ENCODE measurements at regions of chr2 and their contacts with region 1.

Region 1: GRCh38 chr2:218269899-218270720 is at the starts of genes AAMP and PNKD:
- DNase-seq: peak; percentile 100
- ATAC-seq: peak; percentile 89
- H3K4me3 ChIP-seq: peak within 1 kb of the TSS; percentile 82 to 95
- H3K4me3 Mint-ChIP-seq: peak within 1 kb of the TSS; percentile 92
- H3K27ac ChIP-seq: peak within 1 kb of the TSS; percentile 81 to 82
- H3K27ac Mint-ChIP-seq: peak within 1 kb of the TSS; percentile 92
- H3K4me1 ChIP-seq: peaks cover 31% of the 10 kb centered on the region
- H3K4me1 Mint-ChIP-seq: peaks cover 50% of the 10 kb centered on the region
- H3K27me3 ChIP-seq: no peaks in the 10 kb centered on the region
- H3K27me3 Mint-ChIP-seq: no peaks in the 10 kb centered on the region
- CTCF ChIP-seq: no peak
- total RNA-seq, gene AAMP: 44.7 to 50.4 TPM
- total RNA-seq, gene PNKD: 7.1 to 7.2 TPM

Region 2: GRCh38 chr2:218074031-218074430 is 196.1 kb before region 1 on chr2:
- CTCF ChIA-PET with region 1: no interaction called
- POLR2A ChIA-PET with region 1: no interaction called
- intact Hi-C with region 1: no loop called
- DNase-seq: peak in 2 of 9 experiments; percentile 23 to 28
- ATAC-seq: no peak
- H3K4me3 ChIP-seq: no peak overlapping the region
- H3K4me3 Mint-ChIP-seq: no peak overlapping the region
- H3K27ac ChIP-seq: no peak overlapping the region
- H3K27ac Mint-ChIP-seq: no peak overlapping the region
- H3K4me1 ChIP-seq: no peaks in the 10 kb centered on the region
- H3K4me1 Mint-ChIP-seq: peaks cover 3% of the 10 kb centered on the region
- H3K27me3 ChIP-seq: no peaks in the 10 kb centered on the region
- H3K27me3 Mint-ChIP-seq: peaks cover 5% of the 10 kb centered on the region
- CTCF ChIP-seq: no peak

Region 3: DNA sequence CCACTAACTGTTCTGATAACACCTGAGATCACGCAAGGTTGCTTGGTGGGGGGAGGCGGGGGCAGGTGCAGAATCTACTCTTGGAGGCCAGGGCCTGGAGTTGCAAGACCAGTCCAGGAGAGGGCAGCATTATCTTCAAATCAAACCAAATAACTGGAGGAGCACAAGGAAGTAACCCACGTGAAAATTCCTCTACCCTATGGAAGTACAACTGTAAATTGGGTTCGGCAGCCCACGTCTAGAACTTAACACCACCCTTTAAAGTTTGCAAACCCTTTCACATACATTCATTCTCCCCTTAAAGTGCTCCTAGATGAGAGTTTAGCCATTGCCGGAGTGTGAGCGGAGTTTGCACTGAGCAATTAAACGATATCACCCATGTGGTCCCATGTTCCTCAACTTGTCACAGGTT is 83.7 kb before region 1 on chr2:
- CTCF ChIA-PET with region 1: interaction called, 9 read pairs
- POLR2A ChIA-PET with region 1: no interaction called
- intact Hi-C with region 1: loop called in 1 of 2 experiments (anchors 1 kb)
- DNase-seq: peak; percentile 48 to 85 (median 71)
- ATAC-seq: peak; percentile 100
- H3K4me3 ChIP-seq: no peak overlapping the region
- H3K4me3 Mint-ChIP-seq: no peak overlapping the region
- H3K27ac ChIP-seq: no peak overlapping the region
- H3K27ac Mint-ChIP-seq: no peak overlapping the region
- H3K4me1 ChIP-seq: peaks cover 8% of the 10 kb centered on the region
- H3K4me1 Mint-ChIP-seq: peaks cover 8% of the 10 kb centered on the region
- H3K27me3 ChIP-seq: no peaks in the 10 kb centered on the region
- H3K27me3 Mint-ChIP-seq: no peaks in the 10 kb centered on the region
- CTCF ChIP-seq: peak; percentile 74

Region 4: GRCh38 chr2:218292048-218293014 is 22.2 kb after region 1 on chr2 and contains the start of gene TMBIM1:
- CTCF ChIA-PET with region 1: interaction called, 340 read pairs
- POLR2A ChIA-PET with region 1: interaction called, 58 read pairs
- intact Hi-C with region 1: loop called (anchors 1 kb)
- DNase-seq: peak; percentile 64 to 91 (median 79)
- ATAC-seq: peak; percentile 82
- H3K4me3 ChIP-seq: peak within 1 kb of the TSS; percentile 79 to 89
- H3K4me3 Mint-ChIP-seq: peak within 1 kb of the TSS; percentile 83
- H3K27ac ChIP-seq: peak within 1 kb of the TSS; percentile 72 to 87
- H3K27ac Mint-ChIP-seq: peak within 1 kb of the TSS; percentile 98
- H3K4me1 ChIP-seq: peaks cover 50% of the 10 kb centered on the region
- H3K4me1 Mint-ChIP-seq: peaks cover 51% of the 10 kb centered on the region
- H3K27me3 ChIP-seq: no peaks in the 10 kb centered on the region
- H3K27me3 Mint-ChIP-seq: no peaks in the 10 kb centered on the region
- CTCF ChIP-seq: peak; percentile 93
- total RNA-seq, gene TMBIM1: 80.8 to 86.7 TPM

Region 5: DNA sequence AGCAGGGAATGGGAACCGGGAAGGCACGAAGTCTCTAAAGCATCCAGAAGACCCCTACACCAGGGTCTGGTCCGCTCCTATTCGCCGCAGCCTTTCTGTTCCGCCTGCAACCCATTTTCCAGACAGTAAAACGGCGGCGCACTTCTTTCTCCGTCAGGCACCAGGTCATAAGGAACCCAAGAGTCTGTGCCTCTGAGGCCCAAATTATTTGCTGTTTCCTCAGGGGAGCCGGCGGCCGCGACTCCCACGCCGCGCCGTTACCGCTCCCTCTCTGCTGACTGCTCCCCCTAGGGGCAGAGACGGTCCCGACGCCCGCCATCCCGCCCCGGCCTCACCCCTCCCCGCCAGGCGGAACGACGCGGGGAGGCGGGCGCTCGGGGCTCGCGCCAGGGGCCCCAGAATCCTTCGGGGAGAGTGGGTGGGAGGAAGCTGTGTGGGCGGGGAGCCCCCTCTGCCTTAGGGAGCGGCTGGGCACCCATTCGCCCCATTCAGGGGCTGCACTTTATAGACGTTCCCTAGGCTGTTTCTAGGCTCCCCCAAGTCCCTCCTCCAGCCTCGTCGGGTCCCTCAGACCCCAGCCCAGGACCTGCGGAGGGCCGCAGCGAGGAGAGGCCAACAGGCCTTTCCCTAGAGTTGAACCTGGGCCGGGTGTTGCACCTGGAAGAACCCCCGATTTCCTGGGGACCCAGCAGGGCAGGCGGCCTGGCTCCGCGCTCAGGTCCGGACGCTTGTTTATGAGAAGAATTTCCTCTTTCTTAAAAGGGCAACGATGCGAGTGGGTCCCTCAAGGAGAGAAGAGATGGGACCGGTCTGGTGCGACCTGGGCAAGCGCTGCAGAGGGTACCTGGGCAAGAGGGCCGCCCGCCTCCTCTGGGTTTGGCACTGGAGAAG is 125.9 kb after region 1 on chr2:
- CTCF ChIA-PET with region 1: interaction called, 13 read pairs
- POLR2A ChIA-PET with region 1: interaction called, 19 read pairs
- intact Hi-C with region 1: loop called (anchors 1 kb)
- DNase-seq: peak; percentile 87 to 98 (median 94)
- ATAC-seq: peak; percentile 74
- H3K4me3 ChIP-seq: peak overlapping the region; percentile 83 to 99
- H3K4me3 Mint-ChIP-seq: peak overlapping the region; percentile 95
- H3K27ac ChIP-seq: peak overlapping the region; percentile 92 to 98
- H3K27ac Mint-ChIP-seq: peak overlapping the region; percentile 98
- H3K4me1 ChIP-seq: peaks cover 40% of the 10 kb centered on the region
- H3K4me1 Mint-ChIP-seq: peaks cover 43% of the 10 kb centered on the region
- H3K27me3 ChIP-seq: no peaks in the 10 kb centered on the region
- H3K27me3 Mint-ChIP-seq: no peaks in the 10 kb centered on the region
- CTCF ChIP-seq: peak; percentile 83

Region 6: DNA sequence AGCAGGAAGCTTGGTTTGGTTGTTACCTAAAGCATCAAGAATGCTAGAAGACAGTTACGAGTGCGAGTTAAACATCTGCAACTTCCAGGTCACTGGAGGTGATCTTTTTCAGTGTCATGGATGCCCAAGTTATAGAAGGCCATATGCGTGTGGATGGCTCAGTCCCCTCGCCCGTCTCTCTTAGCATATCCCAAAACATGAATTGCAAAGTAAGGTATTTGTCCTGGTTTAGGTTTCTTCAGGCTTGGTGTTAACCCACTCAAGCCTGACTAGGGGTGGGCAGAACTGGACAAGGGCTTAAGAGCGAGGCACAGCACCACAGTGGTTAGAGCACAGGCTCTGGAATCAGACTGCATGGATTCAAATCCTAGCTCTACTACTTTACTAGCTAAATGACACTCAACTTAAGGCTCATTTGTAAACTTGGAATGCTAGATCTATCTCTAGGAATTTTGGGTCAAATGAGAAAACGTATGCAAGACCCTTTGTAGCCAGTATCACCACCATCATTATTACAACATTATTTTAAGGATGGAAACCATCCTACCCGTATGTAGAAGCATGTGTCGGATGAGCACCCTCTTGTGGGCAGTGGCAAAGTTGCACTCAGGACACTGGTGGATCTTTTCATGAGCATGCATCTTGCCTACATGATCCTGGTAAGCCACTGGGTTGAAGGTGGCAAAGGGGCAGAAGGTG is 378.1 kb after region 1 on chr2:
- CTCF ChIA-PET with region 1: interaction called, 4 read pairs
- POLR2A ChIA-PET with region 1: no interaction called
- intact Hi-C with region 1: loop called in 1 of 2 experiments (anchors 5 kb)
- DNase-seq: peak; percentile 24 to 72 (median 54)
- ATAC-seq: peak; percentile 95
- H3K4me3 ChIP-seq: no peak overlapping the region
- H3K4me3 Mint-ChIP-seq: no peak overlapping the region
- H3K27ac ChIP-seq: no peak overlapping the region
- H3K27ac Mint-ChIP-seq: no peak overlapping the region
- H3K4me1 ChIP-seq: peaks cover 5% of the 10 kb centered on the region
- H3K4me1 Mint-ChIP-seq: peaks cover 15% of the 10 kb centered on the region
- H3K27me3 ChIP-seq: no peaks in the 10 kb centered on the region
- H3K27me3 Mint-ChIP-seq: no peaks in the 10 kb centered on the region
- CTCF ChIP-seq: peak; percentile 79

Region 7: GRCh38 chr2:218756599-218757377 is 486.7 kb after region 1 on chr2:
- CTCF ChIA-PET with region 1: no interaction called
- POLR2A ChIA-PET with region 1: no interaction called
- intact Hi-C with region 1: no loop called
- DNase-seq: no peak
- ATAC-seq: no peak
- H3K4me3 ChIP-seq: no peak overlapping the region
- H3K4me3 Mint-ChIP-seq: no peak overlapping the region
- H3K27ac ChIP-seq: no peak overlapping the region
- H3K27ac Mint-ChIP-seq: no peak overlapping the region
- H3K4me1 ChIP-seq: no peaks in the 10 kb centered on the region
- H3K4me1 Mint-ChIP-seq: no peaks in the 10 kb centered on the region
- H3K27me3 ChIP-seq: no peaks in the 10 kb centered on the region
- H3K27me3 Mint-ChIP-seq: no peaks in the 10 kb centered on the region
- CTCF ChIP-seq: no peak

Region 8: GRCh38 chr2:218908721-218909619 is 638.9 kb after region 1 on chr2:
- CTCF ChIA-PET with region 1: no interaction called
- POLR2A ChIA-PET with region 1: no interaction called
- intact Hi-C with region 1: loop called in 1 of 2 experiments (anchors 1 kb)
- DNase-seq: peak; percentile 77 to 94 (median 88)
- ATAC-seq: peak; percentile 99
- H3K4me3 ChIP-seq: peak overlapping the region; percentile 56
- H3K4me3 Mint-ChIP-seq: peak overlapping the region; percentile 81
- H3K27ac ChIP-seq: peak overlapping the region; percentile 32
- H3K27ac Mint-ChIP-seq: peak overlapping the region; percentile 62
- H3K4me1 ChIP-seq: peaks cover 8% of the 10 kb centered on the region
- H3K4me1 Mint-ChIP-seq: peaks cover 14% of the 10 kb centered on the region
- H3K27me3 ChIP-seq: no peaks in the 10 kb centered on the region
- H3K27me3 Mint-ChIP-seq: peaks cover 15% of the 10 kb centered on the region
- CTCF ChIP-seq: no peak

Region 9: GRCh38 chr2:219020604-219021365 is 750.7 kb after region 1 on chr2:
- CTCF ChIA-PET with region 1: no interaction called
- POLR2A ChIA-PET with region 1: no interaction called
- intact Hi-C with region 1: no loop called
- DNase-seq: no peak
- ATAC-seq: no peak
- H3K4me3 ChIP-seq: no peak overlapping the region
- H3K4me3 Mint-ChIP-seq: no peak overlapping the region
- H3K27ac ChIP-seq: no peak overlapping the region
- H3K27ac Mint-ChIP-seq: no peak overlapping the region
- H3K4me1 ChIP-seq: no peaks in the 10 kb centered on the region
- H3K4me1 Mint-ChIP-seq: no peaks in the 10 kb centered on the region
- H3K27me3 ChIP-seq: no peaks in the 10 kb centered on the region
- H3K27me3 Mint-ChIP-seq: peaks cover 8% of the 10 kb centered on the region
- CTCF ChIP-seq: no peak